ENCODE measurements at regions of chr1 and their contacts with region 1.

Region 1: GRCh38 chr1:59738591-59739015 is 76.1 kb upstream of the HOOK1 start:
- DNase-seq: no peak
- H3K4me3 ChIP-seq: no peak overlapping the region
- H3K27ac ChIP-seq: no peak overlapping the region
- H3K4me1 ChIP-seq: no peaks in the 10 kb centered on the region
- H3K27me3 ChIP-seq: no peaks in the 10 kb centered on the region
- CTCF ChIP-seq: no peak
- EP300 ChIP-seq: no peak
- POLR2A ChIP-seq: no peak
- RAD21 ChIP-seq: no peak

Region 2: DNA sequence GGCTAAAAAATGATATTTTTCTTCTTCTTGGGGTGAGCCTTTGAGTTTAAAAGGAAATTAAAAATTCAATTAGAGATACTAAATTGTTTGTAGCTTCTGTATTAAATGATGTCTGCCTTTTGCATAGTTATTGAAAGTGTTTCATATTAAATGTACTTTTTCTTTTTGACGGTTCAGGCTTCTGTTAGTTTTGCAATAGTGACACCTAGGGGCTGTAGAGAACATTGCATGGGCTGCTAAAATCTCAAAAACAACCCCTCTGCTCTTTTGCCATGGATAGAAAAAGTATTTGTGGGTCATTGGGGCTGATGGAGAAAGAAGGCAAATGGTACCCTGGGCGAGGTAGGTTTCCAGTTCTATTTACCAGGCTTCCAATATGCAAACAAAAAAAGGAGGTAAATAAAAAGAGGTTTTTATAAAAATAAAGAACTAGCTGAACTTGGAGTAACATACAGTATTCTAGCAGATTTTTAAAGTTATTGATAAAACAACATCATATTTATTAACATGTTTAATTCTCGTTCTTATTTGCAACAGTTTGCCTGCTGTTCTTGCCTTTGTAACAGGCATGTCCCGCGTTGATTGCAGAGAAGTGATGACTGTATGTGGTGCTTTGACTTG is 39.3 kb before region 1 on chr1:
- CTCF ChIA-PET with region 1: no interaction called
- POLR2A ChIA-PET with region 1: no interaction called
- DNase-seq: no peak
- H3K4me3 ChIP-seq: no peak overlapping the region
- H3K27ac ChIP-seq: no peak overlapping the region
- H3K4me1 ChIP-seq: peaks cover 0 to 9% (median 2%) of the 10 kb centered on the region in 4 experiments; a peak in 5 of 7 replicates
- H3K27me3 ChIP-seq: no peaks in the 10 kb centered on the region
- CTCF ChIP-seq: peak in 2 of 3 experiments; percentile 60 to 80; a peak in 3 of 4 replicates
- EP300 ChIP-seq: no peak
- POLR2A ChIP-seq: no peak
- RAD21 ChIP-seq: peak; percentile 94

Region 3: DNA sequence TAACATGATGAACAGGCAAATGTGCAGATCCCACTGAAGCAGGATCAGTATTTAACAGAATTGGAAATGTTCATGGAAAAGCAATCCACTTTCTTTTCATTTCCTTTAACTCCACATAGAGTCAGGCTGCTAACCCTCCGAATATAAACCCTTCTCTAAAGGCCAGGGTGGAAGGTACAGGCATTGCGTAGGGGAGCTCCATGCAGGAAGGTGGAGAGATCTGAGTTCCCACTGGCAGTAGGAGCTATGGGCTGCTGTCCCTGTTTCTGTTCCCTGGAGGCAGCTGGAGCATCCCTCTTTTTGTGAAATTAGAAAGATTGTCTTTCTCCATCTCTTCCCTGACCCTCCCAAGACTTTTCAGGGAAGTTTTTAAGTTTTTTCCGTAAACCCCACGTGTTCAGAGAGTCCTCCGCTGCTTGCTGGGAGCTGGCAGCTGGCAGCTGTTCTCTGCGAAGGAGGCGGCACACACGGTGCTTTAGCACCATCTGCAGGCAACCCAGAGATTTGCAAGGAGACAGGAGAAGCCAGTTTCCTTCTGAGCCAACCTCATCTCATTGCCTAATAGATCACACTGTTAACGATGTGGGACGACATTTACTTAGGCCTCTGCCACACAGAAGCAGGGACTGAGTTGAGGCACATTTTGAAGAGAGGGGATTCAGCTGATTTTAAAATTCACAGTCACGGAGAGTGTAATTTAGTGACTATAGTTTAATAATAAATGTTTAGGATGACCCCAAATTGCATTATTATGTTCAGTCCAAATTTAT is 20.7 kb after region 1 on chr1:
- CTCF ChIA-PET with region 1: interaction called, 15 read pairs
- POLR2A ChIA-PET with region 1: no interaction called
- DNase-seq: peak; percentile 54 to 84
- H3K4me3 ChIP-seq: no peak overlapping the region
- H3K27ac ChIP-seq: no peak overlapping the region
- H3K4me1 ChIP-seq: no peaks in the 10 kb centered on the region; a peak in 1 of 7 replicates
- H3K27me3 ChIP-seq: peaks cover 0 to 1% (median 0%) of the 10 kb centered on the region in 4 experiments; a peak in 1 of 7 replicates
- CTCF ChIP-seq: peak; percentile 75 to 96 (median 84)
- EP300 ChIP-seq: 0 out of 3 replicates have a peak, but pooled peaks of 1 of the 2 experiments have one; percentile 18
- POLR2A ChIP-seq: no peak
- RAD21 ChIP-seq: peak; percentile 99

Region 4: GRCh38 chr1:59892841-59893811 is 154.5 kb after region 1 on chr1:
- CTCF ChIA-PET with region 1: no interaction called
- POLR2A ChIA-PET with region 1: no interaction called
- DNase-seq: no peak
- H3K4me3 ChIP-seq: no peak overlapping the region
- H3K27ac ChIP-seq: no peak overlapping the region
- H3K4me1 ChIP-seq: no peaks in the 10 kb centered on the region
- H3K27me3 ChIP-seq: no peaks in the 10 kb centered on the region
- CTCF ChIP-seq: no peak
- EP300 ChIP-seq: no peak
- POLR2A ChIP-seq: no peak
- RAD21 ChIP-seq: no peak

Measured in H1 (cell line).